CD4-positive, alpha-beta T cell (primary cell): ENCODE measurements at regions of chr22 and their contacts with region 1.

Region 1: DNA sequence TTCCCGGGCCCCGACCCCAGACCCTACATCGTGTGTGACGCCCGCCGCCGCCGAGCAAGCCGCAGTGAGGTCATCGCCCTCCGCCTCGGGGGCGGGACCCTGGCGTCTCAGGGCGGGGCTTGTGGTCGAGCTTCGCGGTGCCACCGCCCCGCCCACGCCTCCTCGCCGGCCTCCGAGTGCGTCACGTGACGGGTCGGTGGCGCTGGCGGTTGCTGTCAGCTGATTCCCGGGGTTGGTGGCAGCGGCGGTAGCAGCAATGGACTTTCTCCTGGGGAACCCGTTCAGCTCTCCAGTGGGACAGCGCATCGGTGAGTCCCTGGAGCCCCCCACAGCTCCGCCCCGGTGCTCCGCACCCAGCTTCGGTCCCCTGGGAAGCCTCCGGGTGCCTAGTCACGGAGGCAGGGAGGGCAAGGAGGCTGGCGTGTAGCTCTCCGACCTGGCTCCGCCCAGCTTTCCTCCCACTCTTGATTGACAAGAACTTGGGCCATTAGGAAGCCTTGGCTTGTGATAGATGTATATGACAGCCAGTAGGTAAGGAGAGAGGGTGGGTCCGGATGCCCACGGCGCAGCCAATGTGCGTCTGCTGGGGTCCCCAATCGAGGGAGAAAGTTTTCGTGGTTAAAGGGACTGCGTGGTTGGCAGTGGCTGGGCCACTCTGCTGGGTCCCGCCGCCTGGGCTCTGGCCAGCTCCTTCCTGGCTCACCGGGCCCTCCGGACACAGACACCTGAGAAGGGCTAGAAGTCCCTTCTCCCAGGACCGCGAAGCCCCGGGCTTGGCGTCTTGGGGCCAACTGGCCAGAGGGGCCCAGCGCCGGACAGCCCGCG is at the start of gene TOM1:
- DNase-seq: peak; percentile 95 to 99 (median 98)
- ATAC-seq: peak; percentile 84
- H3K4me3 ChIP-seq: peak within 1 kb of the TSS; percentile 63
- H3K4me3 Mint-ChIP-seq: peak within 1 kb of the TSS; percentile 100
- H3K27ac ChIP-seq: peak within 1 kb of the TSS; percentile 87 to 96
- H3K27ac Mint-ChIP-seq: peak within 1 kb of the TSS; percentile 96
- H3K4me1 ChIP-seq: peaks cover 46% of the 10 kb centered on the region
- H3K4me1 Mint-ChIP-seq: peaks cover 44% of the 10 kb centered on the region
- H3K27me3 ChIP-seq: no peaks in the 10 kb centered on the region
- H3K27me3 Mint-ChIP-seq: no peaks in the 10 kb centered on the region
- CTCF ChIP-seq: no peak
- total RNA-seq, gene TOM1: 211 to 219 TPM

Region 2: GRCh38 chr22:35054064-35054463 is 245.8 kb before region 1 on chr22:
- CTCF ChIA-PET with region 1: no interaction called
- POLR2A ChIA-PET with region 1: no interaction called
- intact Hi-C with region 1: no loop called
- DNase-seq: no peak
- ATAC-seq: no peak
- H3K4me3 ChIP-seq: no peak overlapping the region
- H3K4me3 Mint-ChIP-seq: no peak overlapping the region
- H3K27ac ChIP-seq: no peak overlapping the region
- H3K27ac Mint-ChIP-seq: no peak overlapping the region
- H3K4me1 ChIP-seq: no peaks in the 10 kb centered on the region
- H3K4me1 Mint-ChIP-seq: no peaks in the 10 kb centered on the region
- H3K27me3 ChIP-seq: peaks cover 0 to 4% of the 10 kb centered on the region in 2 experiments
- H3K27me3 Mint-ChIP-seq: peaks cover 35% of the 10 kb centered on the region
- CTCF ChIP-seq: no peak

Region 3: DNA sequence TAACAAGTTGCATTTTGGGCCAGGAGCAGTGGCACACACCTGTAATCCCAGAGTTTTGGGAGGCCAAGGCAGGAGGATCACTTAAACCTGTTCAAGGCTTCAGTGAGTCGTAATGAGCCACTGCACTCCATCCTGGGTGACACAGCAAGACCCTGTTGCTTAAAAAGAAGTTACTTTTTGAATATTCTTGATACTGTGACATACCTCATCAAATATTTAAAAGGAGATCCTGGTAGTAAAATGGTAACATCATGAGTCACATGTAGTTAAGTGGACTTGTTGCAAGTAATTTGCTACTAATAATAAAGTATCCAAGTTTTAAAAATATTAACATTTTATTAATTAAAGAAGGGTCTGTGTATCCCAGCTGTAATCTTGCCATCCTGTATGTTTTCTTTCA is 24.3 kb before region 1 on chr22:
- CTCF ChIA-PET with region 1: no interaction called
- POLR2A ChIA-PET with region 1: interaction called, 11 read pairs
- intact Hi-C with region 1: no loop called
- DNase-seq: no peak
- ATAC-seq: no peak
- H3K4me3 ChIP-seq: no peak overlapping the region
- H3K4me3 Mint-ChIP-seq: no peak overlapping the region
- H3K27ac ChIP-seq: no peak overlapping the region
- H3K27ac Mint-ChIP-seq: no peak overlapping the region
- H3K4me1 ChIP-seq: peaks cover 7% of the 10 kb centered on the region
- H3K4me1 Mint-ChIP-seq: peaks cover 44% of the 10 kb centered on the region
- H3K27me3 ChIP-seq: no peaks in the 10 kb centered on the region
- H3K27me3 Mint-ChIP-seq: no peaks in the 10 kb centered on the region
- CTCF ChIP-seq: no peak

Region 4: GRCh38 chr22:35330258-35330861 is 30.5 kb after region 1 on chr22:
- CTCF ChIA-PET with region 1: interaction called, 6 read pairs
- POLR2A ChIA-PET with region 1: interaction called, 50 read pairs
- intact Hi-C with region 1: loop called (anchors 2 to 5 kb)
- DNase-seq: peak; percentile 23 to 83 (median 52)
- ATAC-seq: peak; percentile 71
- H3K4me3 ChIP-seq: no peak overlapping the region
- H3K4me3 Mint-ChIP-seq: peak overlapping the region; percentile 69
- H3K27ac ChIP-seq: peak overlapping the region in 1 of 2 donors; percentile 64
- H3K27ac Mint-ChIP-seq: peak overlapping the region; percentile 86
- H3K4me1 ChIP-seq: peaks cover 55% of the 10 kb centered on the region
- H3K4me1 Mint-ChIP-seq: peaks cover 34% of the 10 kb centered on the region
- H3K27me3 ChIP-seq: no peaks in the 10 kb centered on the region
- H3K27me3 Mint-ChIP-seq: no peaks in the 10 kb centered on the region
- CTCF ChIP-seq: no peak

Region 5: GRCh38 chr22:35552196-35552842 is 252.4 kb after region 1 on chr22:
- CTCF ChIA-PET with region 1: no interaction called
- POLR2A ChIA-PET with region 1: interaction called, 4 read pairs
- intact Hi-C with region 1: loop called in 1 of 2 experiments (anchors 5 kb)
- DNase-seq: peak; percentile 77 to 92 (median 82)
- ATAC-seq: peak; percentile 97
- H3K4me3 ChIP-seq: no peak overlapping the region
- H3K4me3 Mint-ChIP-seq: peak overlapping the region; percentile 40
- H3K27ac ChIP-seq: no peak overlapping the region
- H3K27ac Mint-ChIP-seq: peak overlapping the region; percentile 0
- H3K4me1 ChIP-seq: peaks cover 24% of the 10 kb centered on the region
- H3K4me1 Mint-ChIP-seq: peaks cover 17% of the 10 kb centered on the region
- H3K27me3 ChIP-seq: no peaks in the 10 kb centered on the region
- H3K27me3 Mint-ChIP-seq: no peaks in the 10 kb centered on the region
- CTCF ChIP-seq: no peak

Region 6: GRCh38 chr22:35582861-35583670 is 283.2 kb after region 1 on chr22:
- CTCF ChIA-PET with region 1: no interaction called
- POLR2A ChIA-PET with region 1: no interaction called
- intact Hi-C with region 1: no loop called
- DNase-seq: peak; percentile 20 to 80 (median 41)
- ATAC-seq: peak; percentile 64
- H3K4me3 ChIP-seq: no peak overlapping the region
- H3K4me3 Mint-ChIP-seq: no peak overlapping the region
- H3K27ac ChIP-seq: no peak overlapping the region
- H3K27ac Mint-ChIP-seq: no peak overlapping the region
- H3K4me1 ChIP-seq: no peaks in the 10 kb centered on the region
- H3K4me1 Mint-ChIP-seq: no peaks in the 10 kb centered on the region
- H3K27me3 ChIP-seq: no peaks in the 10 kb centered on the region
- H3K27me3 Mint-ChIP-seq: no peaks in the 10 kb centered on the region
- CTCF ChIP-seq: peak; percentile 91

Region 7: DNA sequence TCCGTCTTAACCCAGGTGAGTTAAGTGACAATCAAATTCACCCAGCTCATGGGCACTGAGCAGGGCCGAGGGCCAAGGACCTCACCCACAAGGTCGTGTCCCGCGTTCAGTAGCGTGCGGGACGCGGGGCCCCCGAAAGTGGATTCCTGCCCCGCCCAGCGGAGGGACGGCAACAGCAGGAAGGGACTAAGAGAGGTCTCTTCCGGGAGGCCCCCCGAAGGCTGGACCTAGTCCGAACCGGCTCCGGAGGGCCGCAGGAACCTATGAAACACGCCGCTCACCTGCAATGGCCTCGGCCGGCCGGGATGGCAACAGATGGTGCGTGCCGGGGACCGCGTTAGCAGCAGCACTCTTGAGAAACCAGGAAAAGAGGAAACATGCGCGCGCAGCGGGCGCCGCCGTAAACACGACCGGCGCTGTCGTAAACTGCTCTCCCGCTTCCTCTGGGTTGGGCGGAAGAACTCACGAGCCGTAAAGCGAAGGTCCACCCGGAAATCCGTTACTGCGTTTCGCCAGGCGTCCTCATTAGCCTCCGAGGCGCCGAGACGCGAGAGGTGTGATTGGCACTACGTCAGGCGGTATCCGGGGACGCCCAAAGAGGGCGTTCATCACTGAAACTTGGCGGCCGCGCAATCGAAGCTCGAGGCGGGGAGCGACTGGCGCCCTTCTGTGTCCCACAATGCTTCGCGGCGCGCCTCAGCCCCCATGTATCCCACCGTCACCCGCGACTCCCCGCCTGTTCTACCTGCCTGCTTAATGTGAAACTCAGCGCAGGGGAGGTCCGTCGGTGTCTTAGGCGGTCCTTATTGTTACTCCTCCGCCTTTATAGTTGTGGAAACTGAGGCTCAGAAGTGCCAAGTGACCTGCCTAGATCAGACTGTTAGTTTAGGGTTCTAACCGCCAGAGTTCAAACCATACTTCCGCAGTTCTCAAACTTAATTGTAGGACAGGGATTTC is 1229.2 kb after region 1 on chr22 and contains the start of gene EIF3D:
- CTCF ChIA-PET with region 1: no interaction called
- POLR2A ChIA-PET with region 1: interaction called, 6 read pairs
- intact Hi-C with region 1: loop called in 1 of 2 experiments (anchors 10 kb)
- DNase-seq: peak; percentile 95 to 100 (median 98)
- ATAC-seq: peak; percentile 91
- H3K4me3 ChIP-seq: peak within 1 kb of the TSS; percentile 95
- H3K4me3 Mint-ChIP-seq: peak within 1 kb of the TSS; percentile 92
- H3K27ac ChIP-seq: peak within 1 kb of the TSS; percentile 87 to 94
- H3K27ac Mint-ChIP-seq: peak within 1 kb of the TSS; percentile 93
- H3K4me1 ChIP-seq: peaks cover 19% of the 10 kb centered on the region
- H3K4me1 Mint-ChIP-seq: peaks cover 26% of the 10 kb centered on the region
- H3K27me3 ChIP-seq: no peaks in the 10 kb centered on the region
- H3K27me3 Mint-ChIP-seq: no peaks in the 10 kb centered on the region
- CTCF ChIP-seq: no peak
- total RNA-seq, gene EIF3D: 285 to 286 TPM